Naive thymus-derived CD4-positive, alpha-beta T cell (primary cell): ENCODE measurements at regions of chr14 and their contacts with region 1.

Region 1: GRCh38 chr14:39607978-39608377 is 175.7 kb upstream of the FBXO33 start:
- DNase-seq: no peak
- ATAC-seq: no peak
- H3K4me3 ChIP-seq: no peak overlapping the region
- H3K4me3 Mint-ChIP-seq: peak overlapping the region in 4 of 10 donors; percentile 9 to 53 (median 29)
- H3K27ac ChIP-seq: no peak overlapping the region
- H3K27ac Mint-ChIP-seq: peak overlapping the region in 3 of 9 donors; percentile 42 to 80 (median 43)
- H3K4me1 ChIP-seq: peaks cover 4 to 18% of the 10 kb centered on the region in 2 donors
- H3K4me1 Mint-ChIP-seq: peaks cover 0 to 71% (median 64%) of the 10 kb centered on the region in 7 donors
- H3K27me3 ChIP-seq: no peaks in the 10 kb centered on the region
- H3K27me3 Mint-ChIP-seq: no peaks in the 10 kb centered on the region

Region 2: DNA sequence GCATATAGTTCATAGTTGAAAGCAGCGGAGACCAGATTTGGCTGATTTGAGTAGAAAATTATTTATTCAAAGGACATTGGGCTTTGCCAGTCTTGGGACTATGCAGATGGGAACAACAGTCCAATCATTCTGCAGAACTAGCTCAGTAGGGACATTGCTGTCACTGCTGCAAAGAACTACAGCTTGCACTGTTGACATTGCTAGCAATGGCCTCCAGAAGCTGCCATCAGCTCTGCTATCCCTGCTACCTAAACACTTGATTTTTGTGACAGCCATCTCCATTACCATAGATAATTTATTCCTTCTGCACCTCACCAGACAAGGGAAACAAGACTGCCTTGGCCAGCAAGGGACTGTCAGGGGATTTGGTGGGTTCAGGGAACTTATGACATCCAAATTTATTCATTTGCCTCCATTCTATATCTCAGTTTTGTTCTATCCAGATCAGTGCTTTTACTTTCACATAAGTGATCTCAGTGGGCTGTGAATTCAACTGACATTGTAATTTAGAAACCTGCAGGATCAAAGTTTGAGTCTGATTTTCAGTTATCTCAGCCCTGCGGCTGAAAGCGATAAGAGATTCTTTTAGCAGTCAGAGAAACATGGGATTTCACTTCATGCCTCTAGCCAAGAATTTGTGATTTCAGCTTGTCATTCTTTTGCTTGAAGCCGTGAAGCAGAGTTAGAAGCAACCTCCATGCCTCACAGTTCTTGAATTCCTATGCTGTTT is 39.0 kb before region 1 on chr14:
- CTCF ChIA-PET with region 1: no interaction called
- POLR2A ChIA-PET with region 1: no interaction called
- intact Hi-C with region 1: no loop called
- DNase-seq: no peak
- ATAC-seq: no peak
- H3K4me3 ChIP-seq: no peak overlapping the region
- H3K4me3 Mint-ChIP-seq: no peak overlapping the region
- H3K27ac ChIP-seq: no peak overlapping the region
- H3K27ac Mint-ChIP-seq: no peak overlapping the region
- H3K4me1 ChIP-seq: no peaks in the 10 kb centered on the region
- H3K4me1 Mint-ChIP-seq: no peaks in the 10 kb centered on the region
- H3K27me3 ChIP-seq: no peaks in the 10 kb centered on the region
- H3K27me3 Mint-ChIP-seq: no peaks in the 10 kb centered on the region

Region 3: DNA sequence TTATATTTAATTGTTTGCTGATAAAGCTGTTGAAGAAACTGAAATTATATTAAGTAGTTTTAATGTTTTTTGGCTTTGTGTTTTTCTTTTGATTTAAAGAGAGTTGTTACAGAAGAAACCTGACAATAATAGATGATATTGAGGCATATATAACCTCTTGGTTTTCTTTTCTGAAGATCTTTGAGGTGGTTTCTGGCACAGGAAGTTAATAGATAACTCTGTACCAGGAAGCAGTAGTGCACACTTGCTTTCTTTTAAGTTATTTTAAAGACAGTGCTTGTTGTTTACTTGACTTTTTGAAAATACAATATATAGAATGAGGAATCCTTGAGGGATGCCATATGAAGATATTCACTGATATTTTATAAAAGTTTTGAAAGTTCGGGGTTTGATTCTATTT is 33.2 kb after region 1 on chr14:
- CTCF ChIA-PET with region 1: no interaction called
- POLR2A ChIA-PET with region 1: interaction called, 3 read pairs
- intact Hi-C with region 1: loop called in 1 of 2 experiments (anchors 5 kb)
- DNase-seq: peak in 5 of 9 donors; percentile 15 to 54 (median 19)
- ATAC-seq: peak; percentile 80
- H3K4me3 ChIP-seq: no peak overlapping the region
- H3K4me3 Mint-ChIP-seq: peak overlapping the region in 8 of 10 donors; percentile 31 to 76 (median 66)
- H3K27ac ChIP-seq: no peak overlapping the region
- H3K27ac Mint-ChIP-seq: peak overlapping the region; percentile 43 to 92 (median 82)
- H3K4me1 ChIP-seq: peaks cover 0 to 4% of the 10 kb centered on the region in 2 donors
- H3K4me1 Mint-ChIP-seq: peaks cover 0 to 32% (median 18%) of the 10 kb centered on the region in 7 donors
- H3K27me3 ChIP-seq: no peaks in the 10 kb centered on the region
- H3K27me3 Mint-ChIP-seq: no peaks in the 10 kb centered on the region